ENCODE measurements at regions of chr1 and their contacts with region 1.

Region 1: DNA sequence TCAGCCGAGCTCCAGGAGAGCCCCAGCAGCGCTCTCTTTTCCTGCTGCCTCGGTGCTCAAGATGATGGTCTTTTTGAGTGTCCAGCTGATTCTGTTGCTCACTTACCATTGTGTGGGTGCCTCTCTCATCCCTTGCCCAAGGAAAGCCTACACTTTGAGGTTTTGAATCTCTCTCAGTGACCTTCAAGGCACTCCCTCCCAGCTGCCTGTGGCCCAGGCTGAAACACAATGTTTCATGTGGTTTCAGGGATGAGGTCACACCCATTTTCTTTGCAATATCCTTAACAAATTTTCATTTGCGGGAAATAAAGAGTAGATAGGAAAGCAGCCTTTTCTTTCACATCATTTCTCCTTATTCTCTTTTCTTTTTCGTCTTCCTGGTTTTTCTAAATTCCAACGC is 12.6 kb upstream of the MRPS14 start:
- DNase-seq: no peak
- H3K4me3 Mint-ChIP-seq: no peak overlapping the region
- H3K27ac Mint-ChIP-seq: no peak overlapping the region
- H3K4me1 Mint-ChIP-seq: peaks cover 10% of the 10 kb centered on the region
- H3K27me3 Mint-ChIP-seq: no peaks in the 10 kb centered on the region
- CTCF ChIP-seq: no peak

Region 2: GRCh38 chr1:174606471-174606870 is 429.4 kb before region 1 on chr1:
- CTCF ChIA-PET with region 1: no interaction called
- POLR2A ChIA-PET with region 1: no interaction called
- intact Hi-C with region 1: no loop called
- DNase-seq: no peak
- H3K4me3 Mint-ChIP-seq: no peak overlapping the region
- H3K27ac Mint-ChIP-seq: no peak overlapping the region
- H3K4me1 Mint-ChIP-seq: peaks cover 6% of the 10 kb centered on the region
- H3K27me3 Mint-ChIP-seq: no peaks in the 10 kb centered on the region
- CTCF ChIP-seq: no peak

Region 3: GRCh38 chr1:175124861-175125260 is 89.0 kb after region 1 on chr1:
- CTCF ChIA-PET with region 1: interaction called, 232 read pairs
- POLR2A ChIA-PET with region 1: interaction called, 14 read pairs
- intact Hi-C with region 1: no loop called
- DNase-seq: peak; percentile 36
- H3K4me3 Mint-ChIP-seq: no peak overlapping the region
- H3K27ac Mint-ChIP-seq: no peak overlapping the region
- H3K4me1 Mint-ChIP-seq: peaks cover 13% of the 10 kb centered on the region
- H3K27me3 Mint-ChIP-seq: no peaks in the 10 kb centered on the region
- CTCF ChIP-seq: no peak

Region 4: DNA sequence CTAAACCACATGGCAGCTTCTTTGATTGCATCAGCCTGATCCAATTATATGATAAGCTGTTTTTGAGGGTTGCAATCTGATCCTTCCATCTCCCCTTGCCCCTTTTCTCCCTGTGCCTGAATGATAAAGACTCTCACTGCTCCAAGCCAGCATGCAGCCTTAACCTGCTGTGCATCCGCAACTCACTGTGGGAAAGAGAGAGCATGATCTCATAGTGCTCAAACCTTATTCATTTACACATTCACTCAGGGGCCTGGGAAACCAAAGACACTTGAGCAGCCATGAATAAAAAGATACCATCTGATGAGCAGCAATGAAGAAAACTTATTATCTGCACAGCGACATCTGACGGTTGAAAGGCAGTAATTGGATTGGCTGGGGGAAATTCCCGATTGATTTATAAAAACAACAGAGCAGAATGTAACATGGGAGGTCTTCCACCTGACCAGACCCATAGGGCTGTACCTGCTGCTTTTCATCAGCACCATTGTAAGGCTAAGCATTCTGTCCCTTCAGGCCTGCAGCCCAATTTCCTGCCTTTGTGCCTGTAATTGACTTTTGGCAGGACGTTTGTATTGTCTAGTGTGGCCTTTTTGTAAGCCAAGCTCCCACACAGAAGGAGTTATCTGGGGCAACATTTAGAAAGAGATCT is 94.3 kb after region 1 on chr1:
- CTCF ChIA-PET with region 1: interaction called, 232 read pairs
- POLR2A ChIA-PET with region 1: interaction called, 14 read pairs
- intact Hi-C with region 1: no loop called
- DNase-seq: no peak
- H3K4me3 Mint-ChIP-seq: no peak overlapping the region
- H3K27ac Mint-ChIP-seq: no peak overlapping the region
- H3K4me1 Mint-ChIP-seq: peaks cover 14% of the 10 kb centered on the region
- H3K27me3 Mint-ChIP-seq: no peaks in the 10 kb centered on the region
- CTCF ChIP-seq: no peak